ENCODE measurements at regions of chr12 and their contacts with region 1.

Region 1: GRCh38 chr12:89051065-89051677 is 301.1 kb downstream of the DUSP6 start:
- DNase-seq: no peak
- H3K4me3 Mint-ChIP-seq: no peak overlapping the region
- H3K27ac Mint-ChIP-seq: peak overlapping the region; percentile 42
- H3K4me1 Mint-ChIP-seq: peaks cover 43% of the 10 kb centered on the region
- H3K27me3 Mint-ChIP-seq: no peaks in the 10 kb centered on the region

Region 2: GRCh38 chr12:88836166-88836565 is 215.0 kb before region 1 on chr12:
- intact Hi-C with region 1: no loop called
- DNase-seq: no peak
- H3K4me3 Mint-ChIP-seq: no peak overlapping the region
- H3K27ac Mint-ChIP-seq: no peak overlapping the region
- H3K4me1 Mint-ChIP-seq: no peaks in the 10 kb centered on the region
- H3K27me3 Mint-ChIP-seq: no peaks in the 10 kb centered on the region

Region 3: GRCh38 chr12:89179983-89180382 is 128.8 kb after region 1 on chr12:
- intact Hi-C with region 1: no loop called
- DNase-seq: no peak
- H3K4me3 Mint-ChIP-seq: peak overlapping the region; percentile 50
- H3K27ac Mint-ChIP-seq: peak overlapping the region; percentile 86
- H3K4me1 Mint-ChIP-seq: peaks cover 71% of the 10 kb centered on the region
- H3K27me3 Mint-ChIP-seq: no peaks in the 10 kb centered on the region

Region 4: DNA sequence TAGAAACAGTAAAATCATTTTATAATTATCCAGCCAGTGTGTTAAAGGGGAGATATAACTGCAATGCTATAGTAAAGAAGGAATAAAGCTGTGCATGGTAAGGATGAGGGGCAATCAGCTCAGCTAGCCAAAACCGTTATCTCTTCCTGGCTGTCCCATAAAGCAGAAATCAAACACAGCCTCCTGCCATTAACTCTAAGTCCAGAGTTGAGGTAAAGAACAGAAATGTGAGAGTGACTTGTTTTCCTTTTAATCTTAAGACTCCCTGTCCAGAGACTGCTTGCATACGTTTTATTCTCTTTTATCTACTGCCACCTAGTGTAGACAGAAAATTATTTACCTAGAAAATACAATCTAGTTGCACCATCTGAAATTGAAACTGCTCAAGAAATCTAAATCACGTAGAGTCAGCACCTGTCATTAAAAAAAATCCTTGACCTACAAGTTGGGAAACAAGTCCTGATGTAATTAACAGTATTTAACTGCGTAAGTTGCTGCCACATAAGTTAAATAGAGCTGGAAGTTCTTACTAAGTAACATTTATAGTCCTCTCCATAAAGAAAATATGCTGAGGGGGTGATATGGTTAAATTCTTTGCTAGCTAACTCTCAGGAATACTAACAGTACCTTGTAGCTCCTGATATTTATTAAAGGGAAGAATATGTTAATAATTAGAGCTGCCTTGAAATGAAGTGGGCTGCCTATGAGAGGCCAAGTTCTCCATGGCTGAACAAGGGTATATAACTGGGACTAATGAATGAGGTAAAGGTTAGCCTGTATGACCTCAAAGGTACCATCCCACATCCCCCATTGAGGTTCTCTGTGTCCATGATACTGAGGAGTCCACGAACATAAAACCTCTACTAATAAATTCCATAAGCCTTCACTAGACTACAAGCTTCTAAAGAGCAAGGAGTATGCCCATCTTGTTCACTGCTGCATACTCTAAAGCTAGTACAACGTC is 410.8 kb after region 1 on chr12:
- intact Hi-C with region 1: loop called (anchors 1 kb)
- DNase-seq: no peak
- H3K4me3 Mint-ChIP-seq: peak overlapping the region; percentile 60
- H3K27ac Mint-ChIP-seq: peak overlapping the region; percentile 66
- H3K4me1 Mint-ChIP-seq: peaks cover 55% of the 10 kb centered on the region
- H3K27me3 Mint-ChIP-seq: no peaks in the 10 kb centered on the region

Region 5: DNA sequence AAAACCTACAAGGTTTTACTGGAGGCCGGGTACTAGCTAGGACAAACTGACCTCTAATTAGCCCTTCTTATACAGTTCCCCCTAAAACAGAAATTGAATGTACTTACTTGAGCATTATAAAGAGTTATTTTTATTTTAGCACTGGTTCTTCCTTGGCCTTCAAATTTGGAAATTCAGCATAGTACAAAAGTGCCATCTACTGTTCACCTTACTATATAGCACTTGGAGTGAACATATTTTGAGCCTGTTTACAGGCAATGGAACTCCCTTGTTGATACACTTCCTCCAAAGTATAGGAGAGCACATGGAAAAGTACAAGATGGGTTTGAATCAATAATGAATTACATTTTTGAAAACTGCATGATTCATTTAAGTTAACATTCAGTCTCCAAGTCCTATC is 478.6 kb after region 1 on chr12:
- intact Hi-C with region 1: loop called (anchors 1 kb)
- DNase-seq: no peak
- H3K4me3 Mint-ChIP-seq: no peak overlapping the region
- H3K27ac Mint-ChIP-seq: no peak overlapping the region
- H3K4me1 Mint-ChIP-seq: peaks cover 34% of the 10 kb centered on the region
- H3K27me3 Mint-ChIP-seq: no peaks in the 10 kb centered on the region

Measured in activated T-helper 2 cell treated with anti-CD3 and anti-CD28 coated beads, Interferon-gamma antibody, Interleukin-2, Interleukin-4, amounts not matched to agents 10 μg/mL and 5 μg/mL and 100 μg/mL, durations not matched to agents 14 hours and 24 hours and 36 hours (primary cell).